B cell (primary cell): ENCODE measurements at regions of chr12 and their contacts with region 1.

Region 1: GRCh38 chr12:53159195-53159839 is 21.2 kb upstream of the ZNF740 start:
- DNase-seq: peak; percentile 88
- ATAC-seq: peak; percentile 100
- H3K4me3 ChIP-seq: no peak overlapping the region
- H3K4me3 Mint-ChIP-seq: no peak overlapping the region
- H3K27ac ChIP-seq: no peak overlapping the region
- H3K27ac Mint-ChIP-seq: no peak overlapping the region
- H3K4me1 ChIP-seq: peaks cover 4 to 8% of the 10 kb centered on the region in 2 donors
- H3K4me1 Mint-ChIP-seq: peaks cover 4% of the 10 kb centered on the region
- H3K27me3 ChIP-seq: no peaks in the 10 kb centered on the region
- H3K27me3 Mint-ChIP-seq: no peaks in the 10 kb centered on the region
- CTCF ChIP-seq: peak; percentile 97

Region 2: DNA sequence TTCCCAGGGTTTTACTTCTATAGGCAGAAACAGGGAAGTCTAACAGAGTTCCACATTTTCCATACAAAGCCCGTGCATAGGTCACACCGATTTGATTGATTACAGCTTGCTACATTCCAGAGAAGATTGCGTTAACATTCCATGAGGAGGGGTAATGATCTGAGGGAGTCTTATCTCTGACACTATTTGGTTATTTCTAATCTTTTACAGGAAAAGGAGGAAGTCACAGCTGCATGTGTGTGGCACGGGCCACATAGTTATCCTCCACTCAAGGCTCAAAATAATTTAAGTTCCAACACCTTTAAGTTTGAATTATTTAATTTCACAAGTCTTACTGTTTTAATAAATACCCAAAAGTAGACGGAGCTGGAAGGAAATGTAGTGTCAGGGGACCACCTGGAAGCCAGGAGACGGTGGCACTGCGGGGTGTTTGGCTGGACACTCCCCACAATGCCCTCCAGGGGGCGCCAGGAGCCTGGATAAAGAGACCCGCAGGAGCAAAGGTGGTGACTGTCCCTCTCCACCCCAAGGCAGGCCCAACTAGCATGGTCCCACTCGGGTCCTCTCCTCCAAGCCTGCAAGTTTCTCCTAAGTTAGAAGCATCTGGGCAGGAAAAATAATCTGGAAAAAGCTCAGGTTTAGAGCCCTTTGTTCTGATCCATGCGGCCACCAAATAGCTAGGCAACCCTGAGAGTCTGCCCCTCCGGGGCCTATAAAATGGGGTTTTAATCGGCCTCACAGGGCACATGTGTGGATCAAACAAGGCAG is 274.6 kb before region 1 on chr12:
- CTCF ChIA-PET with region 1: no interaction called
- POLR2A ChIA-PET with region 1: no interaction called
- intact Hi-C with region 1: no loop called
- DNase-seq: peak; percentile 74
- ATAC-seq: peak; percentile 73
- H3K4me3 ChIP-seq: no peak overlapping the region
- H3K4me3 Mint-ChIP-seq: no peak overlapping the region
- H3K27ac ChIP-seq: no peak overlapping the region
- H3K27ac Mint-ChIP-seq: no peak overlapping the region
- H3K4me1 ChIP-seq: peaks cover 5% of the 10 kb centered on the region in 2 donors
- H3K4me1 Mint-ChIP-seq: peaks cover 7% of the 10 kb centered on the region
- H3K27me3 ChIP-seq: peaks cover 0 to 19% (median 2%) of the 10 kb centered on the region in 4 experiments
- H3K27me3 Mint-ChIP-seq: peaks cover 31% of the 10 kb centered on the region
- CTCF ChIP-seq: peak; percentile 88

Region 3: DNA sequence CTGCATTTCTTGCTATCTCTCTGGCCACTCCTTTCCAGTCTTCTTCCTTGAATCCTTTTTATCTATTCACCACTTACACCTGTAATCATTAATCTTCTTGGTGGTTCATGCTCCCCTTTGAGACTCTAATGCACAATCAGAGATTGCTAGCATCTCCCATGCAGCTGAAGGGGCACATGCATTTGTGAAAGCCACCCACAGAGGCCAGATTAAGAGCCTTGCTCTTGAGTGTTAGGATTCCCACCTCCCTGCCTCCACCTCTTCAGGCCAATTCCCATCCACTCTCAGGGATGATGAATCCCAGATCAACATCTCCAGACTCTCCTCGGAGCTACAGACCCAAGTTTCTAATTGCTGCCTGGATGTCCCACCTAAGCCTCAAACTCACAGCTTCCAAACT is 229.8 kb before region 1 on chr12:
- CTCF ChIA-PET with region 1: no interaction called
- POLR2A ChIA-PET with region 1: no interaction called
- intact Hi-C with region 1: no loop called
- DNase-seq: no peak
- ATAC-seq: no peak
- H3K4me3 ChIP-seq: no peak overlapping the region
- H3K4me3 Mint-ChIP-seq: no peak overlapping the region
- H3K27ac ChIP-seq: no peak overlapping the region
- H3K27ac Mint-ChIP-seq: no peak overlapping the region
- H3K4me1 ChIP-seq: no peaks in the 10 kb centered on the region
- H3K4me1 Mint-ChIP-seq: no peaks in the 10 kb centered on the region
- H3K27me3 ChIP-seq: peaks cover 0 to 4% (median 1%) of the 10 kb centered on the region in 4 experiments
- H3K27me3 Mint-ChIP-seq: peaks cover 24% of the 10 kb centered on the region
- CTCF ChIP-seq: no peak

Region 4: DNA sequence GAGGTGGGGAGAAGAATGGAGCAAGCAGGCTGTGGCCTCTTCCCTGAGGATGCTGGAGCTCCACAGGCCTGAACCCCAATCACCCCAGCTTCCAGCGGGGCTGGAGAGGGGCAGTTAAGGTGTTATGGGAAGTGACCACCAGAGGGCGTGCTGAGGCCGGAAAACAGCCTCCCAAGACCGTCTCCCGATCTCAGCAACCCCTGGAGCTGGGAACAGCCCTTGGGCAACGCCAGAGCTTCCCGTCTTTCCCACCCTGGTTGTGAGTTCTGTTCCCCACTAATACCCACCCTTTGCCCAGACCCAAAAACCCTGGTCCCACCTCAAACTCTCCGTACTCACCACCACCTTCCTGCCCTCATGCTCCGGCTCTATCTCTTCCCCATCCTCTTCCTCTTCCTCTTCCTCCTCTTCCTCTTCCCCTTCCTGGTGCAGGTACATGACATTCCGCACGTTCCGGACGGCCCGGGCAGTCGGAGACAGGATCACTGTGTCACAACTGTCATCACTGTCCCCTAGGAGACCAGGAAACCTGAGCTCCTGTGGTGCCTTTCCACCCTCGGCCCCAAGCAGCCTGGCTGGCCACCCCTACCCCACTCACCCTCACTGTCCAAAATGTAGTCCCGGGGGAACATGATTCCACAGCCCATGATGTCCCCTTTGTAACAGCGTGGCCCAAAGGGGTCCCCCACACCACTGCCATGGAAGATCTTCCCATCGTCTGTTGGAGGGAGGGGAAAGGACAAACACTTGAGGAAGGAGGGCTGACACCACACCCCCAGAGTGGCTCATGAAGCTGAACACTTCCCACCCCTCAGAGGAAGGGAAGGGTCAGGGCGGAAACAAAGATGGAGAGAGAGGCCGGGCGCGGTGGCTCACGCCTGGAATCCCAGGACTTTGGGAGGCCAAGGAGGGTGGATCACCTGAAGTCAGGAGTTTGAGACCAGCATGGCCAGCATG is 93.1 kb before region 1 on chr12:
- CTCF ChIA-PET with region 1: interaction called, 17 read pairs
- POLR2A ChIA-PET with region 1: no interaction called
- intact Hi-C with region 1: no loop called
- DNase-seq: peak; percentile 77
- ATAC-seq: peak; percentile 75
- H3K4me3 ChIP-seq: no peak overlapping the region
- H3K4me3 Mint-ChIP-seq: no peak overlapping the region
- H3K27ac ChIP-seq: no peak overlapping the region
- H3K27ac Mint-ChIP-seq: peak overlapping the region; percentile 26
- H3K4me1 ChIP-seq: peaks cover 0 to 2% of the 10 kb centered on the region in 2 donors
- H3K4me1 Mint-ChIP-seq: peaks cover 5% of the 10 kb centered on the region
- H3K27me3 ChIP-seq: no peaks in the 10 kb centered on the region
- H3K27me3 Mint-ChIP-seq: no peaks in the 10 kb centered on the region
- CTCF ChIP-seq: peak; percentile 87

Region 5: DNA sequence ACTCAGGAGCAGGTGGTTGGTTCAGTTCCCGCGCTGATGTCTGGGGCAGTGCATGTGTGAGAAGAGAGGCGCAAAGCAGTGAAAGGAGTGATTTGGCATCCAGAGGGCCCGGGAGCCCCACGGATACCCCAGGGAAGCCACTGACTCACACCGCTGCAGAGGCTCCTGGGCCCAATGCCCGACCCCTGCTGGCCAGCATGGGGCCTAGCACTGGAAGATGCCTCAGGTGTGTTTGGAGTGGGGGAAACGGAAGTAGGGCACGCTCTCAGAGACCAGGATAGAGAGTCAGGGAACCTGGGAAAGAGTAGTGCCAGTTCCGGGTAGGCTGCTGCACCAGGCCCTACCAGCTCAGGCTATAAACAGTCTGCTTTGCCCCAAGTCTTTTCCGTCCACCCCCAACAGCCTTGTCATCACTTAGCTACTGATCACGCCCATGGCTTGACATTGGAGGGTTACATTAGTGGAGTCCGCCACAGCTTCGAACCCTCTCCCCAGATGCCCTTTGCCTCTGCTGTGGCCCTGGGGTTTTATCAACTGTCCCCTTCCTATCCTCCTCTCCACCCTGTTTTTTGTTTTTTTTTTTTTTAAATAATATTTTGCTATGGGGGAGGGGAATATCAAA is 30.9 kb after region 1 on chr12:
- CTCF ChIA-PET with region 1: interaction called, 84 read pairs
- POLR2A ChIA-PET with region 1: interaction called, 4 read pairs
- intact Hi-C with region 1: loop called (anchors 1 kb)
- DNase-seq: peak; percentile 57
- ATAC-seq: peak; percentile 88
- H3K4me3 ChIP-seq: no peak overlapping the region
- H3K4me3 Mint-ChIP-seq: no peak overlapping the region
- H3K27ac ChIP-seq: no peak overlapping the region
- H3K27ac Mint-ChIP-seq: peak overlapping the region; percentile 56
- H3K4me1 ChIP-seq: no peaks in the 10 kb centered on the region
- H3K4me1 Mint-ChIP-seq: peaks cover 12% of the 10 kb centered on the region
- H3K27me3 ChIP-seq: no peaks in the 10 kb centered on the region
- H3K27me3 Mint-ChIP-seq: no peaks in the 10 kb centered on the region
- CTCF ChIP-seq: peak; percentile 69

Region 6: DNA sequence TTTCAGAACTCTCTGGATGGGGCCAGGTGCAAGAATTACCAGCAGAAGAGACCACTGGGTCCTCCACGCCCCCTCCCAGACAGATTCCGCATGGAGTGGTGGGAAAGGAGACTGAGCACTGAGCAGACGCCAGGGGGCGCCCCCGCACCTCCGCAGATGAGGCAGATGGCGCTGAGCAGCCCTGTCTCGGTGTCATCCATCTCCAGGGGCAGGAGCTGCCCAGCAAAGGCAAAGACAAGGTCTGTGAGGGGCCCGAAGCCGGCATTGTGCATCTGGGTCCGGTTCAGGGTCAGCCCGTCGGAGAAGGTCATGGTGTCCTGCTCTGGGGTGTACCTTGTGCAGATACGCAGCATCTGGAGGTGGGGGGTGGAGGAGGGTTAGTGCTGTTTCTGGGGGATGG is 54.0 kb after region 1 on chr12:
- CTCF ChIA-PET with region 1: interaction called, 141 read pairs
- POLR2A ChIA-PET with region 1: interaction called, 3 read pairs
- intact Hi-C with region 1: no loop called
- DNase-seq: peak; percentile 87
- ATAC-seq: peak; percentile 65
- H3K4me3 ChIP-seq: no peak overlapping the region
- H3K4me3 Mint-ChIP-seq: no peak overlapping the region
- H3K27ac ChIP-seq: no peak overlapping the region
- H3K27ac Mint-ChIP-seq: peak overlapping the region; percentile 46
- H3K4me1 ChIP-seq: peaks cover 57 to 65% of the 10 kb centered on the region in 2 donors
- H3K4me1 Mint-ChIP-seq: peaks cover 70% of the 10 kb centered on the region
- H3K27me3 ChIP-seq: no peaks in the 10 kb centered on the region
- H3K27me3 Mint-ChIP-seq: no peaks in the 10 kb centered on the region
- CTCF ChIP-seq: peak; percentile 97

Region 7: GRCh38 chr12:53267999-53268647 is 108.8 kb after region 1 on chr12 and contains the start of gene ESPL1:
- CTCF ChIA-PET with region 1: interaction called, 42 read pairs
- POLR2A ChIA-PET with region 1: no interaction called
- intact Hi-C with region 1: no loop called
- DNase-seq: peak; percentile 92
- ATAC-seq: peak; percentile 93
- H3K4me3 ChIP-seq: peak within 1 kb of the TSS; percentile 63 to 90 (median 70)
- H3K4me3 Mint-ChIP-seq: peak within 1 kb of the TSS; percentile 97
- H3K27ac ChIP-seq: peak within 1 kb of the TSS; percentile 68 to 92
- H3K27ac Mint-ChIP-seq: peak within 1 kb of the TSS; percentile 87
- H3K4me1 ChIP-seq: peaks cover 13 to 20% of the 10 kb centered on the region in 2 donors
- H3K4me1 Mint-ChIP-seq: peaks cover 21% of the 10 kb centered on the region
- H3K27me3 ChIP-seq: no peaks in the 10 kb centered on the region
- H3K27me3 Mint-ChIP-seq: no peaks in the 10 kb centered on the region
- CTCF ChIP-seq: peak; percentile 49
- total RNA-seq, gene ESPL1: 1.7 and 2.4 TPM in 2 replicates

Region 8: GRCh38 chr12:53287741-53288216 is 128.5 kb after region 1 on chr12:
- CTCF ChIA-PET with region 1: interaction called, 140 read pairs
- POLR2A ChIA-PET with region 1: no interaction called
- intact Hi-C with region 1: loop called (anchors 1 kb)
- DNase-seq: peak; percentile 85
- ATAC-seq: peak; percentile 96
- H3K4me3 ChIP-seq: no peak overlapping the region
- H3K4me3 Mint-ChIP-seq: no peak overlapping the region
- H3K27ac ChIP-seq: no peak overlapping the region
- H3K27ac Mint-ChIP-seq: peak overlapping the region; percentile 28
- H3K4me1 ChIP-seq: no peaks in the 10 kb centered on the region
- H3K4me1 Mint-ChIP-seq: peaks cover 5% of the 10 kb centered on the region
- H3K27me3 ChIP-seq: no peaks in the 10 kb centered on the region
- H3K27me3 Mint-ChIP-seq: no peaks in the 10 kb centered on the region
- CTCF ChIP-seq: peak; percentile 82

Region 9: DNA sequence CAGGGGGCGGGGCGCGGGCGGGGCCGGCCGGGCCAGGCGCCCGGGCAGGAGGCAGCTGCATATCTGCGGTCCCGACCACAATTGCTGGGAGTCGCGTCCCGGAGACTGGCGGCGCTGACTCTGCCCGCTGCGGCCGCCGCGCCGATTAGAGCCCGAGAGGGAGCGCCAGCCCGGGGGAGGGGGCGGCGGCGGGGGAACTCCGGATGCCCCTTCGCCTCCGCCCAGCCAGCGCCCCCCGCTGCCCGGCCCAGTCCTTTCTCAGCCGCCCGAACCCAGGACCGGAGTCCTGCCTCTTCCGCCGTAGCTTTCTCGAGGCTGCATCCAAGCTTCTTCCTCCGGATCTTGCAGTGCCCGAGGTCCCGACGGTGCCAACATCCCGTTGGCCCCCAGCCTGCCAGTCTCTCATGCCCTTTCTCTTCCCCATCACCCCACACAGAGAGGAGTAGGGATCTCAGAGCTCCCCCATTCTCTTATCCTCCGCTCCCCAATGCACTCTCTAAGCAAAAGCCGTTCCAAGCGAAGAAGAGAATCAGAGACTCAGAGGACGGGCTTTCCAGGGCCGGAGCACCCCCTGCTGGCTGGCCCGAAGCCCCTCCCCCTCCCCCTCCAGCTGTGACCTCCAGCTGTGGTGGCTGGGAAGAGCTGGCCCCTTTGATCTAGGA is 185.6 kb after region 1 on chr12:
- CTCF ChIA-PET with region 1: interaction called, 37 read pairs
- POLR2A ChIA-PET with region 1: no interaction called
- intact Hi-C with region 1: no loop called
- DNase-seq: peak; percentile 85
- ATAC-seq: peak; percentile 91
- H3K4me3 ChIP-seq: peak overlapping the region in 4 of 5 experiments; percentile 46 to 71 (median 66)
- H3K4me3 Mint-ChIP-seq: peak overlapping the region; percentile 100
- H3K27ac ChIP-seq: no peak overlapping the region
- H3K27ac Mint-ChIP-seq: peak overlapping the region; percentile 85
- H3K4me1 ChIP-seq: peaks cover 6 to 13% of the 10 kb centered on the region in 2 donors
- H3K4me1 Mint-ChIP-seq: peaks cover 14% of the 10 kb centered on the region
- H3K27me3 ChIP-seq: peaks cover 0 to 2% (median 0%) of the 10 kb centered on the region in 4 experiments
- H3K27me3 Mint-ChIP-seq: peaks cover 6% of the 10 kb centered on the region
- CTCF ChIP-seq: peak; percentile 72

Region 10: DNA sequence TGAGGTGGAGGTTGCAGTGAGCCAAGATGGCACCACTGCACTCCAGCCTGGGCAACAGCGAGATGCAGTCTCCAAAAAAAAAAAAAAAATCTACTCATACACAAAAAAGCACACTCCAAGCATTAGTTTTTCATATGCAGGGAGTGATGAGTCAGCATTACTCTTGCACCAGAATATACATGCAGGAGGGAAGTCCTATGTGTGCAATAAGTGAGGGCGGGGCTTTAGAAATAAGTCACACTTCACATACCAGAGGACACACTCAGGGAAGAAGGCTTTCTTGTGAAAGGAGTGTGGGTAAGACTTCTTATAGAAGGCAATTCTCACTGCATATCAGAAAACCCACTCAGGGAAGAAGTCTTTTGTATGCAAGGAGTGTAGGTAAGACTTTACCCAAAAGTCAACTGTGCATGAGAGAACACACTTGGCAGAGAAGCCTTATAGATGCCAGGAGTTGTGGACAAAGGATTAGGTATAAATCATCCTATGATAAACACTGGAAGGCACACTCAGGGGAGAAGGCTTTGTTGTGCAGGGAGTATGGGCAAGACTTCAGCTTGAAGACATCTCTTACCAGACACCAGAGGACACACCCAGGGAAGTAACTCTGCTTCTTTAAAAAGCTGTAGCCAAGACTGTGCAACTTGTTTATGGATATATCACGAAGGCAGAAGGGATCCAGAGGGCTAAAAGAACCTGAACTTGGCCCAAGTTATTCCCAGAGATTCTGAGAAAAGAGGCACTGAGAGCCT is 416.4 kb after region 1 on chr12:
- CTCF ChIA-PET with region 1: no interaction called
- POLR2A ChIA-PET with region 1: no interaction called
- intact Hi-C with region 1: no loop called
- DNase-seq: no peak
- ATAC-seq: no peak
- H3K4me3 ChIP-seq: no peak overlapping the region
- H3K4me3 Mint-ChIP-seq: no peak overlapping the region
- H3K27ac ChIP-seq: no peak overlapping the region
- H3K27ac Mint-ChIP-seq: no peak overlapping the region
- H3K4me1 ChIP-seq: peaks cover 12 to 15% of the 10 kb centered on the region in 2 donors
- H3K4me1 Mint-ChIP-seq: peaks cover 28% of the 10 kb centered on the region
- H3K27me3 ChIP-seq: no peaks in the 10 kb centered on the region
- H3K27me3 Mint-ChIP-seq: no peaks in the 10 kb centered on the region
- CTCF ChIP-seq: no peak

Region 11: GRCh38 chr12:53935383-53936341 is 776.3 kb after region 1 on chr12:
- CTCF ChIA-PET with region 1: no interaction called
- POLR2A ChIA-PET with region 1: no interaction called
- intact Hi-C with region 1: no loop called
- DNase-seq: peak; percentile 51
- ATAC-seq: no peak
- H3K4me3 ChIP-seq: no peak overlapping the region
- H3K4me3 Mint-ChIP-seq: peak overlapping the region; percentile 10
- H3K27ac ChIP-seq: no peak overlapping the region
- H3K27ac Mint-ChIP-seq: no peak overlapping the region
- H3K4me1 ChIP-seq: peaks cover 10 to 30% of the 10 kb centered on the region in 2 donors
- H3K4me1 Mint-ChIP-seq: peaks cover 10% of the 10 kb centered on the region
- H3K27me3 ChIP-seq: peaks cover 0 to 94% (median 68%) of the 10 kb centered on the region in 4 experiments
- H3K27me3 Mint-ChIP-seq: peaks cover 76% of the 10 kb centered on the region
- CTCF ChIP-seq: no peak